Heart left ventricle (tissue), 16 donors: ENCODE measurements at regions of chr7 and their contacts with region 1.

Region 1: DNA sequence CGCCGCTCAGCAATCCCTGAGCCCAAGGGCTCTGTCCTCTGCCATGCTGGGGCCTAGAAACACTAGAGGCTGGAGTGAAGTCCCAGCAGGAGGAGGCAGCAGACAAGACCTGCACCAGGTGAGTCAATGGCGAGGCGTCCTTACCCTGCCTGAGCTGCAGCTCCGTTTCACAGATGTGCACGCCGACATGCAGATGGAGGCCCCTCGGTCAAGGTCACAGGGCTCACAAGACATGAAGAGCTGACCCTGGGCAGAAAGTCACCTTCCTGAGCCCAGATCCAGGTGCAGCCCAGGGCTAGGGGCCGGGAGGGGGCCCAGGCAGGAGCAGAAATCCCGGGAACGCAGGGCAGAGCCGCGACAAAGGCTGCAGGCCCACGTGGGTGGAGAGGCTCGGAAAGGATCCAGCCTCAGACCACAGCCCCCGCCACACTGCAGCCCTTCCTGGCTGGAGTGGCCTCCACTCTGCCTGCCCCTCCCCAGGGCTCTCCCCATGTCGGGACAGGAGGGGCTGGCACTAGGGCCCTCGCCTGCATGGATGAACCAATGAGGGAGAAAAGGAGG is 23.8 kb downstream of the PDGFA start:
- DNase-seq: peak in 3 of 5 donors; percentile 7 to 56 (median 19)
- ATAC-seq: no peak
- H3K4me3 ChIP-seq: no peak overlapping the region
- H3K27ac ChIP-seq: no peak overlapping the region
- H3K4me1 ChIP-seq: peaks cover 0 to 18% (median 0%) of the 10 kb centered on the region in 12 donors
- H3K27me3 ChIP-seq: no peaks in the 10 kb centered on the region
- CTCF ChIP-seq: no peak
- POLR2A ChIP-seq: no peak

Region 2: GRCh38 chr7:322111-322671 is 173.7 kb before region 1 on chr7:
- intact Hi-C with region 1: no loop called
- DNase-seq: peak; percentile 46 to 86 (median 61)
- ATAC-seq: peak; percentile 61 to 89 (median 74)
- H3K4me3 ChIP-seq: peak overlapping the region in 3 of 12 donors; percentile 19 to 25 (median 22)
- H3K27ac ChIP-seq: no peak overlapping the region
- H3K4me1 ChIP-seq: peaks cover 0 to 23% (median 0%) of the 10 kb centered on the region in 12 donors
- H3K27me3 ChIP-seq: peaks cover 0 to 13% (median 0%) of the 10 kb centered on the region in 9 donors
- CTCF ChIP-seq: peak; percentile 82 to 99 (median 94)
- POLR2A ChIP-seq: no peak

Region 3: GRCh38 chr7:485188-486081 is 10.4 kb before region 1 on chr7:
- intact Hi-C with region 1: loop called in 1 of 10 experiments (anchors 1 kb)
- DNase-seq: peak in 3 of 5 donors; percentile 67 to 73 (median 70)
- ATAC-seq: peak; percentile 67 to 86 (median 70)
- H3K4me3 ChIP-seq: no peak overlapping the region
- H3K27ac ChIP-seq: no peak overlapping the region
- H3K4me1 ChIP-seq: peaks cover 0 to 18% (median 0%) of the 10 kb centered on the region in 12 donors
- H3K27me3 ChIP-seq: peaks cover 0 to 18% (median 0%) of the 10 kb centered on the region in 9 donors
- CTCF ChIP-seq: no peak
- POLR2A ChIP-seq: no peak

Region 4: DNA sequence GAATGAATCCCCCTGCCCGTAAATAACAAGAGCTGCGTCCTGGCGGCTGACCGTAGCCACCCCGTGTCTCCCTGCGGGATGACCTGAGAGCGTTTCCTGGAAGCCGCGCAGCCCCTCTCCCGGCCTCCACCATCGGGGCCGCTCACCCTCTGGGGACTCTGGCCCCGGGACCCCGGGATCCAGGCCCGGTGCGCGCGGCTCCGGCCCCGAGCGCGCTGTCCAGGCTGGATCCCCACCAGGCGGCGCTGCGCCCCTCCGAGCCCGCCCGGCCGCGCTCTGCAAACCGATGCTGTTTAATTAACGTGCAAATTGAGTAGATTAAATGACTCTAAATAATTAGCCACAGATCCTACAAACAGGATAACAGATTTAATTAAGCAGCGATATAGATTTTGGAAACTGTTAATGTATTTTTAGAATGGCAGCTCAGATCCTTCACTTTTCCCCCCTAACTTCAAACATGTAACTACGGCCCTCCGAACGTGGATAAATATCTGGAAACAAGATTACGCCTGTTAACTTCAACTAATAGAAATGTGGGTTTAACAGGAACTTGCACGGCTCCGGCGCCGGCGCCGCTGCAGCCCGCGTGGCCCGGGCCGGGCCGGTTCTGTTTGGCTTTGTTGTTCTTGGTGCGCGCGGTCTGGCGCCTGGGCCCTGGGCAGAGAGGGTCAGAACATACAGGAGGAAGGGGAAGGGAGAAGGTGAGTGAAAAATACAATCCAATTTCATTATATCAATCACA is 729.8 kb after region 1 on chr7:
- intact Hi-C with region 1: no loop called
- DNase-seq: no peak
- ATAC-seq: peak in 3 of 4 donors; percentile 41 to 58 (median 47)
- H3K4me3 ChIP-seq: no peak overlapping the region
- H3K27ac ChIP-seq: no peak overlapping the region
- H3K4me1 ChIP-seq: peaks cover 0 to 25% (median 4%) of the 10 kb centered on the region in 12 donors
- H3K27me3 ChIP-seq: peaks cover 71 to 100% (median 95%) of the 10 kb centered on the region in 9 donors
- CTCF ChIP-seq: peak; percentile 59 to 86 (median 80)
- POLR2A ChIP-seq: no peak